Calu3 (cell line): ENCODE measurements at regions of chr10 and their contacts with region 1.

Region 1: GRCh38 chr10:100728928-100729861 is 16.2 kb upstream of the PAX2 start:
- DNase-seq: peak; percentile 49
- H3K4me3 Mint-ChIP-seq: peak overlapping the region; percentile 71
- H3K27ac Mint-ChIP-seq: no peak overlapping the region
- H3K4me1 Mint-ChIP-seq: peaks cover 40% of the 10 kb centered on the region
- H3K27me3 Mint-ChIP-seq: peaks cover 89% of the 10 kb centered on the region
- CTCF ChIP-seq: peak; percentile 36

Region 2: DNA sequence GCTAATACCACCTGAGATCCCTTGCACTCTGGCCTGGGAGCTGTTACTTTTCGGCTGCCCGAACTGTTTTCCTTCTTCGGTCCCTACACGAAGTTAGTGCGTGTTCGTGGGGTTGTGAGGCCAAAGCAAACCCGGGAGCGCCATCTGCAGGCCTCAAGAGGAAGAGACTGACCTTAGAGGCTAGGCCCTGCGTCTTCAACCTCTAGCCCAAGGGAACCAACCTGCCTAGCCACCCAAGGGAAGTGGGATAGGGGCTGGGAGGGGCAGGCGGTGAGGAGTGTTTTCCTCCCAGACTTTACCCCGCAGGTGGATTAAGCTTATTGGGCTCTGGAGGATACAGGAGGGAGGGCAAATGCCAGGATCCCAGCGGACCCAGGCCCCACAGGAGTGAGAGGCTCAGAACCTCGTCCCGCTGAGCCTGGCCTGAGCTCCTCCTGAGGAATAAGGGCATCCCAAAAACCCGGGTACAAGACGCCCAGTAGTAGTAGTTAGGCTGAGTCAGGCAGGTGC is 14.5 kb after region 1 on chr10:
- CTCF ChIA-PET with region 1: interaction called, 12 read pairs
- intact Hi-C with region 1: no loop called
- DNase-seq: no peak
- H3K4me3 Mint-ChIP-seq: no peak overlapping the region
- H3K27ac Mint-ChIP-seq: no peak overlapping the region
- H3K4me1 Mint-ChIP-seq: peaks cover 16% of the 10 kb centered on the region
- H3K27me3 Mint-ChIP-seq: peaks cover 92% of the 10 kb centered on the region
- CTCF ChIP-seq: peak; percentile 46

Region 3: DNA sequence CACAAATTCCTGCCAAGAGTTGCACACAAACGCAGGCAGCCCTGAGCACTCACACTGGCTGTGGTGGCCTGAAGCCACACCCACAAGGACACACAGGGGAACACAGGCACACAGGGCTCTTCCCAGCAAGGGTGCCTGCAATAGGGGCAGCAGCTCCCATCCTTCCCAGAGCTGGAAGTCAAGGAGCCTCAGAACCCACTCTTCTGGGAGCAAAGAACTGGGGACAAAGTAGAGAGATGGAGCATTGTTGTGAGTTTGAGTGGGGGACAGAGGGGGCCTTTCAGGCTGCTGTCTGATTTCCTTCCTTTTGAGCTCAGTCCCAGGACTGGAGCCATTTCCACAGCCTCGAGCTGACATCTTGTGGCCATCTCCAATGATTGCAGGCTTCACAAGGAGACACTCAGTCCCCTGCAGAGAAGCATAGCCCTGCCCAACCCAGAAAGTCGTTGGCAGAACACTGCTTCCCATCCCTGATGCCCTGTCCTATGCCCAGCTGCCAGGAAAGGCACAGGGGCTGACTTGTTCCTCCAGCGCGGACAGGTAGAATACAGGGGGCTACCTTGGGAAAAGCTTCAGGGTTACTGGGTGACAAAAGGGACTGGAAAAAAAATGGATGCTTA is 149.2 kb after region 1 on chr10:
- CTCF ChIA-PET with region 1: no interaction called
- intact Hi-C with region 1: loop called (anchors 10 kb)
- DNase-seq: peak; percentile 41
- H3K4me3 Mint-ChIP-seq: no peak overlapping the region
- H3K27ac Mint-ChIP-seq: no peak overlapping the region
- H3K4me1 Mint-ChIP-seq: peaks cover 19% of the 10 kb centered on the region
- H3K27me3 Mint-ChIP-seq: peaks cover 54% of the 10 kb centered on the region
- CTCF ChIP-seq: peak; percentile 57